Naive thymus-derived CD4-positive, alpha-beta T cell (primary cell): ENCODE measurements at regions of chr15 and their contacts with region 1.

Region 1: GRCh38 chr15:40323239-40323952 is at the start of gene INAFM2:
- DNase-seq: peak; percentile 77 to 91 (median 89)
- ATAC-seq: peak; percentile 95
- H3K4me3 ChIP-seq: peak within 1 kb of the TSS; percentile 34
- H3K4me3 Mint-ChIP-seq: peak within 1 kb of the TSS; percentile 69 to 89 (median 84)
- H3K27ac ChIP-seq: peak within 1 kb of the TSS; percentile 66
- H3K27ac Mint-ChIP-seq: peak within 1 kb of the TSS in 8 of 9 donors; percentile 56 to 86 (median 80)
- H3K4me1 ChIP-seq: peaks cover 15% of the 10 kb centered on the region in 2 donors
- H3K4me1 Mint-ChIP-seq: peaks cover 19 to 51% (median 43%) of the 10 kb centered on the region in 7 donors
- H3K27me3 ChIP-seq: no peaks in the 10 kb centered on the region
- H3K27me3 Mint-ChIP-seq: peaks cover 0 to 23% (median 0%) of the 10 kb centered on the region in 5 donors
- total RNA-seq, gene INAFM2: 7.1 to 21.2 (median 12.7) TPM

Region 2: DNA sequence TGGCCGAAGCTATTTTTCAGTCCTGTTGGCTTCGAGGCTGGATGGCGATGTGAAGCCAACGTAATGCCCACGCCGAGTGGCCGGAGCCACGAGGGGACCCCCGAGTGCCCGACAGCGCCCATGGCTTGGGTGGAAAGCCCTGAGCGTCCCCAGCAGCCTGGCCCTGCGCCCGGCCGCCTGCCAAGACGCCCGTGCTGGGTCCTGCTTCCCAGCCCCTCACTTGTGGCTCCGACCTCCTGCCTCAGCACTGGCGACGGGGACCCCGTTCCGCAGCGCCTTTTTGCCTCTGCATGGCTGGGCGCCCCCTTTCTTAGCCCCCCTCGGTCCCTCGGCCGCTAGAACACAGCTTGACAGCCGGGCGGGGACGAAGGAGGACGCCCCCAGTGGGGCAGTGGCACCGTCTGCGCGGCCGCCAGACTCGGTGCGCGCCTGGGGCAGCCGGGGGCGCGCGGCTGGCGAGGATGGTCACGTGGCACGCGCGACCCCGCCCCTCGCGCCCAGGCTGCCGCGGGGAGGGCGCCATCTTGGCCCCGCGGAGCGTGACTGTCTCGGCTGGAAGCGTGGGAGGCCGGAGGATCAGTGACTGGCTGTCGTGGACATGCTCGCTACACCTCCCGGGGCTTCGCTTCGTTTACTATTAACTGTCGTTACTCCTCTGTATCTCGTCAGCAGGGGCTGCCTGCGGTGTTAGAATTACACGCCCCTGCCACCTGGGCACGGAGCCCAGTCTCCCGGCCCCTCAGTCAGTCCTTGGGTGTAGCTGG is 402.7 kb before region 1 on chr15:
- CTCF ChIA-PET with region 1: no interaction called
- POLR2A ChIA-PET with region 1: no interaction called
- intact Hi-C with region 1: loop called in 1 of 2 experiments (anchors 5 kb)
- DNase-seq: peak; percentile 58 to 86 (median 73)
- ATAC-seq: peak; percentile 97
- H3K4me3 ChIP-seq: peak overlapping the region; percentile 80
- H3K4me3 Mint-ChIP-seq: peak overlapping the region; percentile 75 to 92 (median 88)
- H3K27ac ChIP-seq: no peak overlapping the region
- H3K27ac Mint-ChIP-seq: peak overlapping the region in 8 of 9 donors; percentile 43 to 90 (median 77)
- H3K4me1 ChIP-seq: peaks cover 0 to 5% of the 10 kb centered on the region in 2 donors
- H3K4me1 Mint-ChIP-seq: peaks cover 6 to 29% (median 12%) of the 10 kb centered on the region in 7 donors
- H3K27me3 ChIP-seq: peaks cover 5 to 15% of the 10 kb centered on the region in 2 donors
- H3K27me3 Mint-ChIP-seq: peaks cover 14 to 32% (median 23%) of the 10 kb centered on the region in 5 donors

Region 3: GRCh38 chr15:40038638-40039543 is 284.5 kb before region 1 on chr15 and contains the start of gene SRP14:
- CTCF ChIA-PET with region 1: no interaction called
- POLR2A ChIA-PET with region 1: no interaction called
- intact Hi-C with region 1: loop called in 1 of 2 experiments (anchors 5 kb)
- DNase-seq: peak; percentile 74 to 93 (median 87)
- ATAC-seq: peak; percentile 98
- H3K4me3 ChIP-seq: peak within 1 kb of the TSS; percentile 86
- H3K4me3 Mint-ChIP-seq: peak within 1 kb of the TSS; percentile 92 to 100 (median 100)
- H3K27ac ChIP-seq: peak within 1 kb of the TSS; percentile 96
- H3K27ac Mint-ChIP-seq: peak within 1 kb of the TSS; percentile 94 to 99 (median 98)
- H3K4me1 ChIP-seq: peaks cover 15 to 18% of the 10 kb centered on the region in 2 donors
- H3K4me1 Mint-ChIP-seq: peaks cover 28 to 58% (median 53%) of the 10 kb centered on the region in 7 donors
- H3K27me3 ChIP-seq: no peaks in the 10 kb centered on the region
- H3K27me3 Mint-ChIP-seq: no peaks in the 10 kb centered on the region
- total RNA-seq, gene SRP14: 92.1 to 157 (median 111) TPM

Region 4: DNA sequence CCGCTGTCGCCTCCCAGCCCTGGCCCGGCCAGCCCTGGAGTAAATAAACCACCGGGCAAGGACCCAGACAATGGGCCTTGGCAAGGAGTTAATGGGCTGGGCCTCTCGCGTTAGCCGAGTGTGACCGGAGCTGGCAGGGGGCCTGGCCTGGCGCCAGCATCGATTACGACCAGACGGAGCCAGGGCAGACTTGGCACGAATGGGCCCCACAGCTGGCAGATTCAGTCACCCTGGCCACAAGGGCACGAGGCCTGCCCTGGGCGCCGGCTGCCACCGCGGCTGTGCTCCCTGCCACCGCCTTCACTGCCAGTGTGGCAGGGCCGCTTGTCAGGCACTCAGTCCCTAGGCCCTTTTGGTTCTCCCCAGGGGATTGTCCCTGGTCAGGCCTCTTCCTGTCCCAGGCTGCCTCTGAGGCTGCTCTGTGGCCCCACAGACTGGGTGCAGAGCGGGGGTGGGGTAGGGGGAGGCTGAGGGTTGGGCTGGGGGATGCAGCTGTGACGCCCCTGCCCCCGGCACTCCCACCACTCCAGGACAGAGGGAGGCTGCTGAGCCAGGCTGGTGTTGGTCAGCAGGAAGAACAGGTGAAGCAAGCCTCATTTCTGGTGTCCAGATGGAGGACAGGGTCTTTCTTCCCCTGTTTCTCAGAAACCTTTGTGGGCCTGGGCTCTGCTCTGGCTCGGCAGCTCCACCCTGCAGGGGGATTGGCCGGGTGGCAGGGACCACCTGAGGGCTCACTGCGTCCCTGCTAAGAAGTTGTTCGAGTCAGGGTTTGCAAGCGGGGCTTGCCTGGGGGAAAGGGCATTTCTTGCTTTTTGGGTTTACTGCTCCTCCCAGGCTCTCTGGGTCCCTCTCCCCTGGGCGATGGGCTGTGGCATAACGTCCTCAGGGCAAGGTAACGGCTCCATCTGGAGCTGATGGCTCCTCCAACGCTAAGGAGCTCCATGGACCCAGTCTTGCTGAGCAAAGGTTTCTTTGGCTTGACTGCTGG is 253.9 kb before region 1 on chr15:
- CTCF ChIA-PET with region 1: no interaction called
- POLR2A ChIA-PET with region 1: no interaction called
- intact Hi-C with region 1: no loop called
- DNase-seq: no peak
- ATAC-seq: no peak
- H3K4me3 ChIP-seq: no peak overlapping the region
- H3K4me3 Mint-ChIP-seq: no peak overlapping the region
- H3K27ac ChIP-seq: no peak overlapping the region
- H3K27ac Mint-ChIP-seq: no peak overlapping the region
- H3K4me1 ChIP-seq: peaks cover 0 to 8% of the 10 kb centered on the region in 2 donors
- H3K4me1 Mint-ChIP-seq: peaks cover 7 to 21% (median 17%) of the 10 kb centered on the region in 7 donors
- H3K27me3 ChIP-seq: no peaks in the 10 kb centered on the region
- H3K27me3 Mint-ChIP-seq: peaks cover 0 to 13% (median 0%) of the 10 kb centered on the region in 5 donors

Region 5: GRCh38 chr15:40338041-40338657 is 14.8 kb after region 1 on chr15:
- CTCF ChIA-PET with region 1: interaction called, 366 read pairs
- POLR2A ChIA-PET with region 1: interaction called, 21 read pairs
- intact Hi-C with region 1: loop called (anchors 1 kb)
- DNase-seq: peak; percentile 61 to 79 (median 76)
- ATAC-seq: peak; percentile 87
- H3K4me3 ChIP-seq: no peak overlapping the region
- H3K4me3 Mint-ChIP-seq: peak overlapping the region in 4 of 10 donors; percentile 37 to 67 (median 48)
- H3K27ac ChIP-seq: no peak overlapping the region
- H3K27ac Mint-ChIP-seq: peak overlapping the region in 4 of 9 donors; percentile 6 to 53 (median 42)
- H3K4me1 ChIP-seq: peaks cover 0 to 16% of the 10 kb centered on the region in 2 donors
- H3K4me1 Mint-ChIP-seq: peaks cover 0 to 22% (median 20%) of the 10 kb centered on the region in 7 donors
- H3K27me3 ChIP-seq: no peaks in the 10 kb centered on the region
- H3K27me3 Mint-ChIP-seq: no peaks in the 10 kb centered on the region

Region 6: GRCh38 chr15:40367686-40368611 is 44.6 kb after region 1 on chr15:
- CTCF ChIA-PET with region 1: interaction called, 3 read pairs
- POLR2A ChIA-PET with region 1: interaction called, 4 read pairs
- intact Hi-C with region 1: loop called in 1 of 2 experiments (anchors 1 kb)
- DNase-seq: peak; percentile 82 to 89 (median 86)
- ATAC-seq: peak; percentile 98
- H3K4me3 ChIP-seq: peak overlapping the region; percentile 59
- H3K4me3 Mint-ChIP-seq: peak overlapping the region; percentile 80 to 91 (median 85)
- H3K27ac ChIP-seq: no peak overlapping the region
- H3K27ac Mint-ChIP-seq: peak overlapping the region in 8 of 9 donors; percentile 45 to 91 (median 79)
- H3K4me1 ChIP-seq: peaks cover 19 to 24% of the 10 kb centered on the region in 2 donors
- H3K4me1 Mint-ChIP-seq: peaks cover 14 to 33% (median 26%) of the 10 kb centered on the region in 7 donors
- H3K27me3 ChIP-seq: no peaks in the 10 kb centered on the region
- H3K27me3 Mint-ChIP-seq: peaks cover 0 to 16% (median 0%) of the 10 kb centered on the region in 5 donors